A673 (cell line): ENCODE measurements at regions of chr1 and their contacts with region 1.

Region 1: DNA sequence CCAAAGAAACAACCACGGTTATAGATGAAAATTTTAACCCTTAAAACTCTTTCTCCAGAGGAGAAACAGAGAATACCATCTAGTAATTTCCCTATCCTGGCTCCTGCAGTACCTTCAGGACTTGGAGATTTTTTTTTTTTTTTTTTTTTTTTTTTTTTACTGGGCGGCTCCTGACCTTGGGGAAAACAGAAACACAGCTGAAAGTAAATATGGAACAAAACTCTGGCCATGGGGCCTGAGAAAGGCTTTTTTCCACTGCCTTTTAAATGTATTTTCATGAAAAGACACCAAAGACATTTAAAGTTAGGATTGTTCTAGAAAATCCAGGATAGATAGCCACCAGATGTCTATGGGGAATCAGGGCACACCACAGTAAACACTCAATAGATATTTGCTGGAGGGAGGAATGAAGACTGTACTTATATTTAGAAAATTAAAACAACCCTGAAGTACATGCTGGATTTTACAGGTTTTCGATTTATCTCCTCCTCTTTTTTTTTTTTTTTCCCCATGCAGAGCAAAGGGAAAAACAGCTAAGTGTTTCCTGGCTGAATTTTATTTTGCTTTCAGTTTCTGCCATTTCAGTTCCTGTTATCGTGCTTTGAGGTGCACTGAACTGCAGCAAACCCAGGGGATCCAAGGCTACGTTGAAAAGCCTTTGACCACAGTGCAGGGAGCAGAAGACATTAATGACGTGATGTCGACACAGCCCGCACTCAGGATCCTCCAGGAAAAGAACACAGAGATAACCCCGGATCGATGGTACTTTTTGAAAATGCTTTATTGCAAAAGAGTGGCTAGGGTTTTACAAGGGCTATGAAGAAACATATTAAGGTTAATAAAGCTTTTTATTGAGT is 35.7 kb upstream of the CNN3 start:
- DNase-seq: no peak
- H3K4me3 ChIP-seq: no peak overlapping the region
- H3K27ac ChIP-seq: no peak overlapping the region
- H3K4me1 ChIP-seq: no peaks in the 10 kb centered on the region
- H3K27me3 ChIP-seq: no peaks in the 10 kb centered on the region
- CTCF ChIP-seq: no peak

Region 2: DNA sequence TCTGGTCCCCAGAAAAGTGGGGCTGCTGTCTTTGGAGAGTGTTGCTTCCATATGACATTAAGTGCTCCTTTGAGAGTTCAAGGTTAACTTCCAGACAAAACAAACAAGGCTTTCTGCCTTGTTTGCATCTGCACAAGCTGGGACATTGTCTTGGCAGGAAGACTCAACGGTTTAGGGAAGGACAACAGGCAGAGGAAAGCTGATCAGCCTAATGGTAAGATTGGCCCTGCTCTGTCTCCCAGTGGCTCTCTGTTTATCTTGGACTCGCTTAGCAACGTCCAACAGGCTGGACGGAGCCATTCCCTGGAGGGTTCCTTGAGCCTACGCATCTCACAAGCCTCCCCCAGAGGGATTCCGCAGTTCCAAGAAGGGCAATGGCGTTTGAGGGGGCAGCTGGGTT is 204.7 kb before region 1 on chr1:
- CTCF ChIA-PET with region 1: no interaction called
- POLR2A ChIA-PET with region 1: interaction called, 18 read pairs
- intact Hi-C with region 1: no loop called
- DNase-seq: no peak
- H3K4me3 ChIP-seq: no peak overlapping the region
- H3K27ac ChIP-seq: no peak overlapping the region
- H3K4me1 ChIP-seq: peaks cover 11% of the 10 kb centered on the region
- H3K27me3 ChIP-seq: no peaks in the 10 kb centered on the region
- CTCF ChIP-seq: no peak

Region 3: GRCh38 chr1:94884106-94884505 is 78.5 kb before region 1 on chr1:
- CTCF ChIA-PET with region 1: no interaction called
- POLR2A ChIA-PET with region 1: no interaction called
- intact Hi-C with region 1: no loop called
- DNase-seq: no peak
- H3K4me3 ChIP-seq: no peak overlapping the region
- H3K27ac ChIP-seq: no peak overlapping the region
- H3K4me1 ChIP-seq: no peaks in the 10 kb centered on the region
- H3K27me3 ChIP-seq: no peaks in the 10 kb centered on the region
- CTCF ChIP-seq: no peak

Region 4: DNA sequence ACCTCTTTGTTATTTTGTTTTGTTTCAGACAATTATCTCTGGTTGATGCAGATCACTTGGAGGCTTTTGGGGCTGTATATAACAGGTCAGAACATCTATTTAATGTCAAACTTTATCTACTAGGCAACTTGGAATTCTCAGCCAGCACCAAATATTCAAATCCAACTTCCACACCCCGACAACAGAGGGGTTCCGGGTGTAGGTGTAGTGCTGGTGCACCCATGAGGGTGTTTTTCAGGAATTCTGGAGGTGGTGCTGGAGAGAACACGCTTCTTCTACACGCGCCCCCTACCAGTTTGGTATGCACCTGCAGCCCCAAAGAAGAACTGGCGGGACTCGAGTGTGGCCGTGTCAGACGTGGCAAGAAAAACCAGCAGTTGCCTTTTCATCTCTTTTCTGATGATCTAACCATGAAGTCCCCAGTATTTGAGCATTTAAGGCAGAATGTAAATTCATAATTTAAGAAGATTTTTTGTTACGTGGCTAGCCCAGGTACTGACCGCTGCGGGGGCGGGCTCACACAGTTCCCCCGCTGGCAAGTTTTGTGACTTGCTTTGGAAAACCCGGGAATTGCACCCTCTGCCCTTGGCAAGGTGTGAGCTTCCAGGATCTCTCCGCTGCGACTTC is 154.1 kb after region 1 on chr1:
- CTCF ChIA-PET with region 1: no interaction called
- POLR2A ChIA-PET with region 1: no interaction called
- intact Hi-C with region 1: no loop called
- DNase-seq: peak; percentile 72
- H3K4me3 ChIP-seq: peak overlapping the region; percentile 63
- H3K27ac ChIP-seq: no peak overlapping the region
- H3K4me1 ChIP-seq: peaks cover 6% of the 10 kb centered on the region
- H3K27me3 ChIP-seq: peaks cover 48% of the 10 kb centered on the region
- CTCF ChIP-seq: peak; percentile 66